PC-9 (cell line): ENCODE measurements at regions of chr12 and their contacts with region 1.

Region 1: DNA sequence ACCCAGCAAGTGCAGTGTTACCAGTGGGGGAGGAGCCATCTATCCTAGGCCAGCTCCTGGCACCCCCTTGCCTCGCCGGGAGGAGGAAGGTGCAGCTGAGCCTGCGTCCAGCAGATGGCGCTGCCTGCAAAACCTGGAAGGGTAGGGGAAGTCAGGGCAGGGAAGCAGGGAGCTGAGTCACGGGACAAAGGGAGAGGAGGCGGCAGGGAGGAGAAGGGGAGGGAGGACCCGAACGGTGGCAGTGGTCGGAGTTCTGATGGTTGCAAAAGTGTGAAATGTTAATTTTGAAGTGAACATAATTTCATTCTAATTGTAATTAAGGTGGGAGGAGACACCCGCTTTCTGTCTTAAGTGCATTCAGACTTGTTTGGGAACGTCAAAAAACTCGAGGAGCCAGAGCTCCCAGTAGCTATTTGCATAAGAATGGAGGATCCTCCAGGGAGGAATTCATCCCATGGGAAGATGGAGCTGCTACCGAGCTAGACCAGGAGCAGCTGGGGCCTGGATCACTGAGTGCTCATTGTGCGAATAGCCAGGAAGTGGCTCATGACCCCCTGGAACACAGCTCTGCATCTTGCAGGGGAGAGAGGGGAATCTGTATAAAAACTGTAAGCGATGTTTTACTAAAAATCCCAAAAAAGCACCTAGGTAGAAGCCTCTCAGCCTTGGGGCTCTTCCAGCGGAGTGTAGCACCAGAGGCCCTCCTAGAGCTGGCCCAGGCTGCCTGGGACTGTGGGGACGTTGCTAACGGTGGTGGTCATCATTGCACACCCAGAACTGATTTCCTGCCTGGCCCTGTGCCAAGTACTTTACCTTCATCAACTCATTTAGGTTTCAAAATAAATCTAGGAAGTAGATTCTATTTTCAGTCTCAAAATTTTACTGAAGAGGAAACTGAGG is 59.5 kb downstream of the EMP1 start:
- DNase-seq: peak; percentile 80 to 99
- H3K4me3 ChIP-seq: peak overlapping the region; percentile 36; the same call in 1 of the 2 replicates
- H3K27ac ChIP-seq: no peak overlapping the region
- H3K4me1 ChIP-seq: peaks cover 14% of the 10 kb centered on the region
- H3K27me3 ChIP-seq: no peaks in the 10 kb centered on the region
- CTCF ChIP-seq: peak; percentile 97

Region 2: GRCh38 chr12:12764824-12765223 is 491.2 kb before region 1 on chr12:
- CTCF ChIA-PET with region 1: no interaction called
- POLR2A ChIA-PET with region 1: no interaction called
- intact Hi-C with region 1: no loop called
- DNase-seq: no peak
- H3K4me3 ChIP-seq: no peak overlapping the region
- H3K27ac ChIP-seq: no peak overlapping the region
- H3K4me1 ChIP-seq: no peaks in the 10 kb centered on the region
- H3K27me3 ChIP-seq: no peaks in the 10 kb centered on the region
- CTCF ChIP-seq: no peak

Region 3: GRCh38 chr12:13203034-13203922 is 52.8 kb before region 1 on chr12:
- CTCF ChIA-PET with region 1: interaction called, 3 read pairs
- POLR2A ChIA-PET with region 1: interaction called, 11 read pairs
- intact Hi-C with region 1: loop called (anchors 2 kb)
- DNase-seq: peak in 1 of 2 experiments; percentile 83
- H3K4me3 ChIP-seq: peak overlapping the region; percentile 32; the same call in 1 of the 2 replicates
- H3K27ac ChIP-seq: peak overlapping the region; percentile 99
- H3K4me1 ChIP-seq: peaks cover 97% of the 10 kb centered on the region
- H3K27me3 ChIP-seq: no peaks in the 10 kb centered on the region
- CTCF ChIP-seq: no peak

Region 4: GRCh38 chr12:13278249-13278787 is 22.3 kb after region 1 on chr12:
- CTCF ChIA-PET with region 1: interaction called, 10 read pairs
- POLR2A ChIA-PET with region 1: no interaction called
- intact Hi-C with region 1: no loop called
- DNase-seq: peak in 1 of 2 experiments; percentile 82
- H3K4me3 ChIP-seq: no peak overlapping the region
- H3K27ac ChIP-seq: no peak overlapping the region
- H3K4me1 ChIP-seq: no peaks in the 10 kb centered on the region
- H3K27me3 ChIP-seq: no peaks in the 10 kb centered on the region
- CTCF ChIP-seq: peak; percentile 90

Region 5: GRCh38 chr12:13534645-13535398 is 278.8 kb after region 1 on chr12:
- CTCF ChIA-PET with region 1: interaction called, 7 read pairs
- POLR2A ChIA-PET with region 1: no interaction called
- intact Hi-C with region 1: loop called (anchors 5 kb)
- DNase-seq: peak in 1 of 2 experiments; percentile 65
- H3K4me3 ChIP-seq: no peak overlapping the region
- H3K27ac ChIP-seq: no peak overlapping the region
- H3K4me1 ChIP-seq: no peaks in the 10 kb centered on the region
- H3K27me3 ChIP-seq: no peaks in the 10 kb centered on the region
- CTCF ChIP-seq: peak; percentile 92

Region 6: DNA sequence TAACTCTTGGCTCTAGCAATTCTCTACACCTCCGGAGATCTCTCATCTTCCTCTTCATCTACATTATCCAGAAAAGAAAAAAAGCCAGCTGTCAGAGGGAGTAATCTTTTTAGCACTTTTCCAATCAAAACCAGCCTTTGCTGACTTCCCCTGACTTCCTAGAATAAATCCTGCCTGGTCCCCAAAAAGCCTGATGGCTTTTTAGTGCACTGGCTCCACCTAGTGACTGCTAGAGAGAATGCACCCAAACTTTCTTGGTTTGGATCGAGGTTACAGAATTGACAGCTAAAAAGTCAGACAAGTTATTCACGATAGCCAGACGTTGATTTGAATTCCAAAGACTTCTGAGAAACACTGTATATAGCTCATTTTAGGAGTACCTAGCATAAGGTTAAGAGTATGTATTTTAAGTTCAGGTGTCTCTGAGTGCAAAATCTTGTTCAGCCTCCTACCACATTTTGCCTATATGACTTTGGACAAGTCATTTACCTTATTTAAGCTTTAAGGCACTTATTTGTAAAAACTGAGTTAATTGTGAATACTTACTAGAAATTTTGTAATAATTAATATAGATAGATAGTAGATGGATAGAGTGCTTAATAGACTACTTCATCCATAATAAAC is 911.1 kb after region 1 on chr12:
- CTCF ChIA-PET with region 1: interaction called, 5 read pairs
- POLR2A ChIA-PET with region 1: no interaction called
- intact Hi-C with region 1: loop called (anchors 1 kb)
- DNase-seq: peak; percentile 46 to 61
- H3K4me3 ChIP-seq: no peak overlapping the region
- H3K27ac ChIP-seq: no peak overlapping the region
- H3K4me1 ChIP-seq: no peaks in the 10 kb centered on the region
- H3K27me3 ChIP-seq: no peaks in the 10 kb centered on the region
- CTCF ChIP-seq: peak; percentile 98